Heart right ventricle (tissue), 16 donors: ENCODE measurements at regions of chr12 and their contacts with region 1.

Region 1: GRCh38 chr12:110100315-110100970 is 23.7 kb upstream of the IFT81 start:
- DNase-seq: peak; percentile 34 to 70
- ATAC-seq: peak; percentile 60 to 82 (median 72)
- H3K4me3 ChIP-seq: no peak overlapping the region
- H3K27ac ChIP-seq: peak overlapping the region in 2 of 10 donors; percentile 18 to 39
- H3K4me1 ChIP-seq: peaks cover 0 to 17% (median 6%) of the 10 kb centered on the region in 9 donors
- H3K27me3 ChIP-seq: no peaks in the 10 kb centered on the region
- CTCF ChIP-seq: peak; percentile 84 to 95 (median 90)

Region 2: DNA sequence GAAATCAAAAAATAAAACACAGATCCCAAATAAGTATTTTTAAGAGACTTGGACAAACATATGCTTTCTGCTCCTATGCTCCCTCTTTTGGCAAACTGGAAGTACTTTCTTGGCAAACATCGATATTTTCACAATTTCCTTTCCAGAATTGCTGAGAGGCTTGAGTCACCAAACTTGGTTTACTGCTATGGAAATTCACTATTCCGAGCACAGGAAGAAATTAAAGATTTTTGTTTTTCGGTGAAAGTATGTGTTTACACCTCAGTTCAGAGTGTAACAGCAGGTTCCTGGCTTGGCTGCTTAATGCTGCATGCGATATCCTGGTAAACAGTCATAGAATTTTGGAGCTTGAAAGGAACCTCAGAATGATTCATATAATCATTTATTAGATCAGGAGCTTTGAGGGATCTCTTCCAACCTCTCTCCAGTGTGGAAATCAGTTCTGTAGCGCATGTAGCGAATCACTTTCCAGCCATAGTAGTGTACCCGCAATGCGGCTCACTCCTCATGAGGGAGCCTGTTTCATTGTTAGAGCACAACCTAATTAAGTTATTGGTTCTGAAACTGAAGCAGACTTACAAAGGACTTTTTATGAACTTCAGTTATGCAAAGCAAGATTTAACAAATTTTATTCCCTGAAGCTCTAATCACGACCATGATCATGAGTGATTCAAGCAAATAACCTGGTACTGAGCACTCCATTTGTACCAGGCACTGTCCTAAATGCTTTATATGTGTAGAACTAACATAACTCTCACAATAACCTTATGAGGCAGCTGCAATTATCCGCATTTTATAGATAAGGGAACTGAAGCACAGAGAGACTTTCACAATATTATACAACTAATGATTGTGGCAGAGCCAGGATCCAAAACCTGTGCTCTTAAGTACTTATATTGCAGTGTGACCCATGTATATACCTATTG is 124.2 kb after region 1 on chr12:
- intact Hi-C with region 1: loop called in 5 of 10 experiments (anchors 5 to 10 kb)
- DNase-seq: no peak
- ATAC-seq: peak; percentile 27 to 76 (median 66)
- H3K4me3 ChIP-seq: peak overlapping the region in 8 of 10 donors; percentile 2 to 44 (median 28)
- H3K27ac ChIP-seq: peak overlapping the region; percentile 20 to 82 (median 66)
- H3K4me1 ChIP-seq: peaks cover 2 to 51% (median 34%) of the 10 kb centered on the region in 9 donors
- H3K27me3 ChIP-seq: no peaks in the 10 kb centered on the region
- CTCF ChIP-seq: peak; percentile 27 to 73 (median 54)

Region 3: GRCh38 chr12:110301065-110301806 is 200.8 kb after region 1 on chr12:
- intact Hi-C with region 1: no loop called
- DNase-seq: no peak
- ATAC-seq: peak in 1 of 8 donors; percentile 23
- H3K4me3 ChIP-seq: no peak overlapping the region
- H3K27ac ChIP-seq: peak overlapping the region in 6 of 10 donors; percentile 1 to 50 (median 20)
- H3K4me1 ChIP-seq: peaks cover 5 to 94% (median 80%) of the 10 kb centered on the region in 9 donors
- H3K27me3 ChIP-seq: no peaks in the 10 kb centered on the region
- CTCF ChIP-seq: no peak

Region 4: GRCh38 chr12:110330544-110330943 is 230.1 kb after region 1 on chr12:
- intact Hi-C with region 1: loop called in 2 of 10 experiments (anchors 5 kb)
- DNase-seq: no peak
- ATAC-seq: peak in 1 of 8 donors; percentile 39
- H3K4me3 ChIP-seq: no peak overlapping the region
- H3K27ac ChIP-seq: peak overlapping the region in 2 of 10 donors; percentile 9 to 10
- H3K4me1 ChIP-seq: peaks cover 0 to 78% (median 32%) of the 10 kb centered on the region in 9 donors
- H3K27me3 ChIP-seq: no peaks in the 10 kb centered on the region
- CTCF ChIP-seq: no peak

Region 5: DNA sequence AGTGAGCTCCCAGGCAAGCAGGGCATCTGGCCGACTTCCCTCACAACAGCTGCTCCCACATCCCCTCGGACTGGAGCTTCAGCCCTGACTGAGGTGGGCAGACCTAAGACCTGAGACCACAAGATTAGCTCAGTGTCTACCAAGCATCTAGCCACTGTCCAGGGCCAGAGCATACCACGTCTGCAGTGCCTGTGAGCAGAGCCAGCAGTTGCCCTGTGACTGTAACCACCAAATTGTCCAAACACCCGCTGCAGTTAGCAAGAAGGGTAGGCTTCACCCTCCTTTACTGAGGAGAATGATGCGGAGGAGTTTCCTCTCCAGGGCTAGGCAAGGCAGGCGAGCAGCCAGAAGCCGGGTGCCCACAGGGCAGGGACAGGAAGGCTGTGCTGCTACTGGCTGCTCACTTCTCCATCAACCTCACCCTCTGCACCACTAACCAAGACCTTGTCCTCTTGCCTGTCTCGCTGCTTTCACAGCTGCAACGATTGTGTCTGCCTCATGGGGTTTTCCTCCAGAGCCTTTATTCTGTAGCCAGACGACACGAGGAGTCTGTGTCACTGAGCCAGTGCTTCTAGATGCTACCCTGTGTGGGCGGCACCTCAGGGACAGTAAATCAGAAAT is 249.2 kb after region 1 on chr12:
- intact Hi-C with region 1: loop called in 1 of 10 experiments (anchors 10 kb)
- DNase-seq: no peak
- ATAC-seq: peak in 5 of 8 donors; percentile 3 to 25 (median 10)
- H3K4me3 ChIP-seq: no peak overlapping the region
- H3K27ac ChIP-seq: peak overlapping the region in 4 of 10 donors; percentile 6 to 17 (median 14)
- H3K4me1 ChIP-seq: peaks cover 0 to 36% (median 10%) of the 10 kb centered on the region in 9 donors
- H3K27me3 ChIP-seq: no peaks in the 10 kb centered on the region
- CTCF ChIP-seq: no peak

Region 6: GRCh38 chr12:110431957-110432587 is 331.6 kb after region 1 on chr12:
- intact Hi-C with region 1: loop called (anchors 1 to 5 kb)
- DNase-seq: no peak
- ATAC-seq: no peak
- H3K4me3 ChIP-seq: peak overlapping the region in 9 of 10 donors; percentile 25 to 67 (median 57)
- H3K27ac ChIP-seq: peak overlapping the region in 4 of 10 donors; percentile 6 to 46 (median 30)
- H3K4me1 ChIP-seq: peaks cover 0 to 8% (median 0%) of the 10 kb centered on the region in 9 donors
- H3K27me3 ChIP-seq: no peaks in the 10 kb centered on the region
- CTCF ChIP-seq: no peak